Psoas muscle (tissue), 8 donors: ENCODE measurements at regions of chr15 and their contacts with region 1.

Region 1: GRCh38 chr15:34760909-34761308 is 6.1 kb upstream of the GJD2 start:
- DNase-seq: no peak
- ATAC-seq: no peak
- H3K4me3 ChIP-seq: no peak overlapping the region
- H3K27ac ChIP-seq: no peak overlapping the region
- H3K4me1 ChIP-seq: no peaks in the 10 kb centered on the region
- H3K27me3 ChIP-seq: peaks cover 0 to 20% (median 8%) of the 10 kb centered on the region in 3 donors
- CTCF ChIP-seq: no peak

Region 2: DNA sequence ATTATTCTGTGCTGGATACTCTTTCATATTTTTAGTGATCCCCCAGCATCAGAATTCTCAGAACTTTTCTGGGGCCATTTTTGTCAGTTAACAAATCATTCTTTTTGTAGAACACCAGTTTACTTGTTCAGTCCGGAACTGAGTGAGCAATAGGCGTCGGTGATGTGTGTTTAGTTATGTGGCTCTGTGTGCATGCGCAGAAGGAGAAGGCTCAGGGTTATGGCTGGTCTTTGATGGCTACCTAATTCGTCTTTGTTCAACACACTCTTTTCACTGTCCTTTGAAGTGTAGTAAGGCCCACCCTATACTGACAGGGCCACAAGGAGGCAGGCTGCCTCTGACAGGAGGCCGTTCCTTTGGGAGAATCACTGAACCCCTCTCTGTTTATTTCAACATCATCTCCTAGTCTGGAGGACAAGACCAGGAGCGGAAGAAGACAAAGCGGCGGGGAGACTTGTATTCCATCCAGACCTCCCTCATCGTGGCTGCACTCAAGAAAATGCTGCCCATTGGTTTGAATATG is 950.8 kb before region 1 on chr15:
- intact Hi-C with region 1: loop called in 1 of 2 experiments (anchors 5 kb)
- DNase-seq: no peak
- ATAC-seq: no peak
- H3K4me3 ChIP-seq: no peak overlapping the region
- H3K27ac ChIP-seq: no peak overlapping the region
- H3K4me1 ChIP-seq: no peaks in the 10 kb centered on the region
- H3K27me3 ChIP-seq: no peaks in the 10 kb centered on the region
- CTCF ChIP-seq: no peak

Region 3: GRCh38 chr15:34182942-34183341 is 578.0 kb before region 1 on chr15:
- intact Hi-C with region 1: no loop called
- DNase-seq: no peak
- ATAC-seq: no peak
- H3K4me3 ChIP-seq: no peak overlapping the region
- H3K27ac ChIP-seq: no peak overlapping the region
- H3K4me1 ChIP-seq: peaks cover under 1% of the 10 kb centered on the region
- H3K27me3 ChIP-seq: no peaks in the 10 kb centered on the region
- CTCF ChIP-seq: no peak